Activated naive CD4-positive, alpha-beta T cell treated with anti-CD3 and anti-CD28 coated beads, Interleukin-2, amount 10 ng/mL, durations not matched to agents 7 days and 5 days (primary cell): ENCODE measurements at regions of chr15 and their contacts with region 1.

Region 1: DNA sequence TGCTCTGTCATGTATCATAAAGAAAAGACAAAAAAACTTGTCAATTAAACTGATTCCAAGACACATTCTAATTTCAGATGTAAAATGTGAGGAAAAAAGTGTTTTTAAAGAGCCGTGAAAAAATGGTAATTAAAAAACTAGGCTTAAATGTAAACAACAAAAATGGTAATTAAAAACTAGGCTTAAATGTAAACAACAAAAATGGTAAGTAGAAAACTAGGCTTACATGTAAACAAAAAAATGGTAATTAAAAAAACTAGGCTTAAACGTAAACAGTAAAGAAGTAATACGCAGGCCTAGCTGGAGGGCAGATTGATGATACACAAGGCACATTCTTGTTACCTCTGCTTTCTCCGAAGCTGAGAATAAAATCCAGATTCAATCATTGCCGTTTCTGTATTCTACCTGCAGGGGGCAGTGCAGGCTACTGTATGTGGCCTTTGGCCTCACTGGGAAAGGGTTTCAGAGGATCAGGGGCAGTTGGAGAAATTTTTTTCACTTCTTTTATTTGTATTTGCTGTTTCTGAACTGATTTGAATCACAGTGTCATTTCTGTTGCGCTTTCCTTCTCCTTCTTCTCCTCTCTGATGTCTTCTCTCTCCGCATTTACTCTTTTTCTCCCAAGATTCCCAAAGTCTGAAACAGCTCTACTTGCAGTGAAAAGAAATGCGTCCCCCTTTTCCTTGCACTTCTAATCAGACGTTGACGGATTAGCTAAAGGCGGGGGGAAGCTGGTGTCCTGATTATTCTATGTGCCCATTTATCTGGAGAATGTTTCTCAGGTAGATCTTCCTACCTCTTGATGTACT is 67.2 kb upstream of the MCTP2 start:
- DNase-seq: peak; percentile 69
- H3K4me3 Mint-ChIP-seq: no peak overlapping the region
- H3K27ac Mint-ChIP-seq: no peak overlapping the region
- H3K4me1 Mint-ChIP-seq: no peaks in the 10 kb centered on the region
- H3K27me3 Mint-ChIP-seq: peaks cover 9% of the 10 kb centered on the region

Region 2: DNA sequence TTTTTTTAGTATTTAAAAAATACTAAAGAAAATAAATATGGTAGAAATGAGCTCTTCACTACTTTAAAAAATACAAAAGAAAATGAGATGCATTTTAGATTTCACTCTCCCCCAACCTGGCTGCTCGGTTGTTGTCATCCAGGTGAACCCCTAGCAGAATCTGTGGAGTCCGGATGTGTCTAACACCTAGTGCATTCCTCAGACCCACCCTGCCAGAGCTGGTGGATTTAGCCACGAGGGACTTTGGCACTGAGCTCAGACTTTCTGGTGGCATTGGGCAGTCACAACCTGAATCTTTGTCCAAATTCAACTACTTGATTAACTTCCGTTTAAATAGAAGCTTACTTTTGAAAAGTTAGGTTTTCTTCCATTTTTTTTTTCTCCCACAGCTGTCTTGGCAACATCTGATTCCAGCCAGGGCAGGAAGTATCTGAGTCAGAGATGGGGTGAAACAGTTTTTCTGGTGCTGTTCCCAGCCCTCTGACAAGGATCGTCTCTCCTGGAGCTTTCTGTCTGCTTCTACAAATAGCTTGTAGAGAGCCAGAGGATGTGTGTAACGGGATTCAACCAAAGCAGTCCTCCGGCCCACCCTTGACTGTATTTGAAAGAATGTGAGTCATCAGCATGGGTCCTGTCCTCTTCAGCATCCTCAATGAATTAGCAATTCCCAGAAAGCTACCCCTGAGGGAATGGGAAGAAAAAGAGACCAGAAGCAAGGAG is 234.7 kb before region 1 on chr15:
- CTCF ChIA-PET with region 1: no interaction called
- DNase-seq: no peak
- H3K4me3 Mint-ChIP-seq: no peak overlapping the region
- H3K27ac Mint-ChIP-seq: no peak overlapping the region
- H3K4me1 Mint-ChIP-seq: peaks cover 9% of the 10 kb centered on the region
- H3K27me3 Mint-ChIP-seq: no peaks in the 10 kb centered on the region

Region 3: DNA sequence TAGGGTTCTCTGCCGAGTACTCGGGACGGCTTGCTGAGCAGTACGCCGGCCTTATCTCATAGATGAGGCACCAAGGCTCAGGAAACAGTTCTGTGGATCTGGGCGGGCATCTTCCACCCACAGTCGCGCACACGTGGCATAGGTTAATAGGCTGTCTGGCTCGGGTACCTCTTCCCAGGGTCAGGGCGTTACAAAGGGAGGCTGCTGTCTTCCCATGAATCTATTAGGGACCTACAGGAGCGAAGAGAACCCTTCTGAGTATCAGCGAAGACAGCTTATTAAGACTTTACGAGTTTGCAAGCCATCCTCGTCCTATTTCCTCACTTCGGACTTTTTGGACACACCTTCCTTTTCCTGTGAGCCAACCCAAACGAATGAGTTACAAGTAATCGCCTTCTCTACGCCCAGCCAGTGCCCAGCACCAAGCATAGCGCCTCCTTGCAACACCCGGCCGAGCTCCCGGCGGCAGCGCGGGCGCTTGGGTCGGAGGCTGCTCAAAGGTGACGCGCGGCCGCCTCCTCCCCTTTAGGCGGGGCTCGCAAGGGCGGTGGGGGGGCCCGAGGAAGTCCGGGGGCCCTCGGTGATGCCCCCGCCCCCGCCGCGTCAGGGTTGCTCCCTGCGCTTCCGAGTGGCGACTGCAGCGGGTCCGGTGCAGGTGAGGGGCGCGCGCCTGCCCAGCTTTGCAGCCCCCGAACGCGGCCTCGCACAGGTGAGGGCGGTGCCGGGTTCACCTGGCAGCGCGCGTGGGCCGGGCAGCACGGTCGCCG is 66.9 kb after region 1 on chr15 and contains the start of gene MCTP2:
- CTCF ChIA-PET with region 1: interaction called, 23 read pairs
- DNase-seq: peak; percentile 89
- H3K4me3 Mint-ChIP-seq: peak within 1 kb of the TSS; percentile 88
- H3K27ac Mint-ChIP-seq: peak within 1 kb of the TSS; percentile 89
- H3K4me1 Mint-ChIP-seq: peaks cover 54% of the 10 kb centered on the region
- H3K27me3 Mint-ChIP-seq: peaks cover 3% of the 10 kb centered on the region

Region 4: GRCh38 chr15:94287794-94288246 is 123.6 kb after region 1 on chr15:
- CTCF ChIA-PET with region 1: interaction called, 12 read pairs
- DNase-seq: peak; percentile 67
- H3K4me3 Mint-ChIP-seq: peak overlapping the region; percentile 34
- H3K27ac Mint-ChIP-seq: peak overlapping the region; percentile 56
- H3K4me1 Mint-ChIP-seq: peaks cover 30% of the 10 kb centered on the region
- H3K27me3 Mint-ChIP-seq: no peaks in the 10 kb centered on the region

Region 5: GRCh38 chr15:94335616-94336015 is 171.4 kb after region 1 on chr15:
- CTCF ChIA-PET with region 1: interaction called, 38 read pairs
- DNase-seq: no peak
- H3K4me3 Mint-ChIP-seq: no peak overlapping the region
- H3K27ac Mint-ChIP-seq: no peak overlapping the region
- H3K4me1 Mint-ChIP-seq: no peaks in the 10 kb centered on the region
- H3K27me3 Mint-ChIP-seq: no peaks in the 10 kb centered on the region

Region 6: GRCh38 chr15:94412979-94413746 is 249.0 kb after region 1 on chr15:
- CTCF ChIA-PET with region 1: no interaction called
- DNase-seq: no peak
- H3K4me3 Mint-ChIP-seq: no peak overlapping the region
- H3K27ac Mint-ChIP-seq: no peak overlapping the region
- H3K4me1 Mint-ChIP-seq: no peaks in the 10 kb centered on the region
- H3K27me3 Mint-ChIP-seq: no peaks in the 10 kb centered on the region